Left colon (tissue), 2 donors: ENCODE measurements at regions of chr2 and their contacts with region 1.

Region 1: DNA sequence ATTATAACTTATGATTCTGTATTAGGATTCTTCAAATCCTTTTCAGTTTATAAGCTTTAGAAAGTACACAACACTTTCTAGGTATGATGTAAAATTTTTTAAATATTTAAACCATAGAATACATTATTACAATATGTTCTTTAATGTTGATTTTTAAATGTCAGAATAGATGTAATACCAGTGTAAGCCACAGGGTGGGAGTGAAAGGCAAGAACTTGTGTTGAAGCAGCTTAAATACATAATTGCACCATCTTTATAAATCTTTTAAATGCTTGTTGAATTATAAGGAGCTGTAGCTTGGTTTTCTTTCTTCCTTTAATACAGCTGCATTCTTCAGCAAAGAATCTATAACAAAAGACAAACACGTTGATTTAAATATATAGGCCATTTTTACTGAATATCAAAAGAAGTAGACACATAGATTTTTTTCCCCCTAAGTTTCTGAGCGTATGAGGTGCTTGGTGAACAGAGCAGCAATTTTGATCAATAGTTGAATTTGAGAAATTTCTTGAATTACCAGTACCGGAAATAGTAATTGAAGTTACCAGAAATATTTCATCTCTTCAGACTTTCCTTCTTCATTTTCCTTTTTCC is 63.0 kb downstream of the TANK start:
- DNase-seq: no peak
- ATAC-seq: peak; percentile 49

Region 2: DNA sequence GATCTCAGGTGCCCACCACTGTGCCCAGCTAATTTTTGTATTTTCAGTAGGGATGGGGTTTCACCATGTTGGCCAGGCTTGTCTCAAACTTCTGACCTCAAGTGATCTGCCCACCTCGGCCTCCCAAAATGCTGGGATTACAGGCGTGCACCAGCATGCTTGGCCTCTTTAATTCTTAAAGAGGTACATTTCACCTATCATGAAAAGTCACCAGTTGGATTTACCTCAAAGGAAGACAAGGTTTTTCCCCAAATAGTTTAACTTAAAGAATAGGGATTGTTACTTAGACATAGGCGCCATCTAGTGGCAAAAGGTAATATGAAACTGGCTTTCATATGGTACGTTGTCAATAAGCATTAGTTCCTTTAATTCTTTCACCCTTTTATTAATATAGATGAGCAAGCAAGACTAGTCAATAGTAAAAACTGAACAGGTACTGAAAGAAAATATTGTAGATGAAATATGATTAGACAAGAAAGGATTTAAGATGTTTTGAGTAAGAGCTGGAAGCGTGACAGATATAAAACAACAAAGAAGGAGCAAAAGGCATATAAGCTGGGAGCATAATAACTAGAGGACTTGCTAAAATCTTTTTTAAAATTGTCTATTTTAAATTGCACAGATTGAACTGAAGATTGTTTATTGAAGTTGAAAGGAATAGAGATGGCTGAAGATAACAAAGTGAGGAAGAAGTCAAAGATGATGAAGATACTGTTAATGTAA is 50.0 kb after region 1 on chr2:
- intact Hi-C with region 1: loop called in 1 of 2 experiments (anchors 5 kb)
- DNase-seq: no peak
- ATAC-seq: peak; percentile 36